ENCODE measurements at regions of chr5 and their contacts with region 1.

Region 1: GRCh38 chr5:110054240-110054639 is 364.5 kb downstream of the MAN2A1 start:
- DNase-seq: peak; percentile 72
- H3K4me3 Mint-ChIP-seq: no peak overlapping the region
- H3K27ac Mint-ChIP-seq: peak overlapping the region; percentile 74
- H3K4me1 Mint-ChIP-seq: peaks cover 27% of the 10 kb centered on the region
- H3K27me3 Mint-ChIP-seq: no peaks in the 10 kb centered on the region

Region 2: DNA sequence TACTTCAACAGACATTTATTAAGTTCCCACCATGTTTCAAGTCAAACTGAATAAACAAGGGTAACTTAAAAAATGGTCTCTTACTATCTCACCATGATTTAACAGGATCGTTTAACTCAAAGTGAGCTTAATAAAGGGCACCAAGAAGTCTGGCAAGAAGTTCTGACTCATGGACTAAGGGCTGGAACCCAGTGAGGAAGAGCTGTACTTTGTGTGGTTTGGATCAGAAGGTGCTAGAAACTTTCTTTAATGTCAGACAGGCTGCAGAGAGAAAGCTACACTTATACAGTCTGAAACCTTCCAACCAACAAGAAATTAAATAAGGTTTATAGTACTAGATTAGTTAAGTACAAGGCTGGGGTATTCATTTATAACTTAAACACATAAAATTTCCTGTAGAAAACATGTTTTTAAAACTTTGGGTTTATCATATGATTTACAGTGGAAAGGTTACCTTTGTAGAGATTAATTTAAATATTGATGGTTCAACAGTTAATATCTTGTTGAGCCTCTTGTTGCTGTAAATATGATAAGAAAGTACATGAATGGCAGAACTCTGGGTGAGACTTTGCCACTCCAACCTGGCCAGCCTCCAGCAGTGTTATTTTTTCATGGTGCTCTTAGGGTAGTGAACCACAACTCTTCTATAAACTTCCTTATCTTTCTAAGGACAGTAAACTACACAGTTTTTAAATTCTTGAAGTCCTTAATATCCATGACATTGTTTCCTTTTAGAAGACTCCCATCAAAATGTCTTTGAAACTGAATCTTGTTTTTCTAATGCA is 201.7 kb before region 1 on chr5:
- intact Hi-C with region 1: loop called (anchors 10 kb)
- DNase-seq: no peak
- H3K4me3 Mint-ChIP-seq: no peak overlapping the region
- H3K27ac Mint-ChIP-seq: no peak overlapping the region
- H3K4me1 Mint-ChIP-seq: peaks cover 56% of the 10 kb centered on the region
- H3K27me3 Mint-ChIP-seq: no peaks in the 10 kb centered on the region

Region 3: GRCh38 chr5:109921735-109922380 is 132.4 kb before region 1 on chr5:
- intact Hi-C with region 1: loop called (anchors 5 kb)
- DNase-seq: peak; percentile 61
- H3K4me3 Mint-ChIP-seq: peak overlapping the region; percentile 74
- H3K27ac Mint-ChIP-seq: peak overlapping the region; percentile 95
- H3K4me1 Mint-ChIP-seq: peaks cover 39% of the 10 kb centered on the region
- H3K27me3 Mint-ChIP-seq: no peaks in the 10 kb centered on the region

Region 4: GRCh38 chr5:110072646-110073045 is 18.4 kb after region 1 on chr5:
- intact Hi-C with region 1: no loop called
- DNase-seq: no peak
- H3K4me3 Mint-ChIP-seq: no peak overlapping the region
- H3K27ac Mint-ChIP-seq: no peak overlapping the region
- H3K4me1 Mint-ChIP-seq: peaks cover 7% of the 10 kb centered on the region
- H3K27me3 Mint-ChIP-seq: peaks cover 2% of the 10 kb centered on the region

Region 5: GRCh38 chr5:110092955-110093785 is 38.9 kb after region 1 on chr5:
- intact Hi-C with region 1: loop called (anchors 2 kb)
- DNase-seq: no peak
- H3K4me3 Mint-ChIP-seq: no peak overlapping the region
- H3K27ac Mint-ChIP-seq: no peak overlapping the region
- H3K4me1 Mint-ChIP-seq: peaks cover 15% of the 10 kb centered on the region
- H3K27me3 Mint-ChIP-seq: no peaks in the 10 kb centered on the region

Measured in activated T-helper 1 cell treated with anti-CD3 and anti-CD28 coated beads, Interleukin-12 subunit alpha, Interleukin-12 subunit beta, Interleukin-2, Interleukin-4 antibody, amounts not matched to agents 30 ng/mL and 10 ng/mL and 1 ng/mL, durations not matched to agents 14 hours and 24 hours and 36 hours (primary cell).